ENCODE measurements at regions of chr6 and their contacts with region 1.

Region 1: DNA sequence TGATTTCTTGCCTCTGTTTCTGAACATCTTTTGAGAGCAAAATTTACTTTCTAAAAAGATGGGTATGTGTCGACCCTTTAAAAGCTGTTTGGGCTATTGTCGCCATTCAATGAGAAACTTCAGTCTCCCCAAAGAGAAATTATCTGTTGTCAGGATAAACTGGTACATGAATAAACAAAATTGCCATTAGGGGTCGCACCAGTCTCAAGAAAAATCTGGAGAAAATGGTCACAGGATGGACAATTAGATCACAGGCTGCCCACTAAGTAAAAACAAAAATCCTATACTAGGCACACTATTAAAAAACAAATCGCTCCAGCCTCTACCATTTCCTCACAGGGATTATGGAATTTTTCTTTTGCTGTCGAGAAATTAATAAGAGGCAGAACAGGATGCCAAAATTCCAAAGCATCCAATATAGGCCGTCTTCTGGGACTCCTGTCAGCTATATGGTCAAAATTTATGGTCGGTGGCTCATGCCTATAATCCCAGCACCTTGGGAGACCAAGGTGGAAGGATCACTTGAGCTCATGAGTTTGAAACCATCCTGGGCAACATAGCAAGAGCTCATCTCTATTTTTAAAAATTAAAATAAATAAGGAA is 5.5 kb upstream of the HLA-E start:
- DNase-seq: peak in 1 of 2 experiments; percentile 61
- ATAC-seq: no peak
- H3K4me3 ChIP-seq: no peak overlapping the region
- H3K27ac ChIP-seq: no peak overlapping the region
- H3K4me1 ChIP-seq: peaks cover 14% of the 10 kb centered on the region; the same call in 1 of the 3 replicates
- CTCF ChIP-seq: peak; percentile 62
- EP300 ChIP-seq: no peak
- POLR2A ChIP-seq: no peak
- RAD21 ChIP-seq: peak; percentile 68

Region 2: GRCh38 chr6:30441171-30441570 is 42.6 kb before region 1 on chr6:
- CTCF ChIA-PET with region 1: no interaction called
- POLR2A ChIA-PET with region 1: no interaction called
- DNase-seq: no peak
- ATAC-seq: no peak
- H3K4me3 ChIP-seq: no peak overlapping the region
- H3K27ac ChIP-seq: no peak overlapping the region
- H3K4me1 ChIP-seq: 0 out of 3 replicates have a peak, but pooled peaks cover 4% of the 10 kb centered on the region
- CTCF ChIP-seq: no peak
- EP300 ChIP-seq: no peak
- POLR2A ChIP-seq: no peak
- RAD21 ChIP-seq: no peak

Region 3: GRCh38 chr6:30453508-30454116 is 30.2 kb before region 1 on chr6:
- CTCF ChIA-PET with region 1: interaction called, 13 read pairs
- POLR2A ChIA-PET with region 1: no interaction called
- DNase-seq: peak; percentile 81 to 89
- ATAC-seq: peak; percentile 82 to 97
- H3K4me3 ChIP-seq: no peak overlapping the region
- H3K27ac ChIP-seq: no peak overlapping the region
- H3K4me1 ChIP-seq: no peaks in the 10 kb centered on the region
- CTCF ChIP-seq: peak; percentile 61
- EP300 ChIP-seq: no peak
- POLR2A ChIP-seq: no peak
- RAD21 ChIP-seq: peak; percentile 52 to 60

Region 4: DNA sequence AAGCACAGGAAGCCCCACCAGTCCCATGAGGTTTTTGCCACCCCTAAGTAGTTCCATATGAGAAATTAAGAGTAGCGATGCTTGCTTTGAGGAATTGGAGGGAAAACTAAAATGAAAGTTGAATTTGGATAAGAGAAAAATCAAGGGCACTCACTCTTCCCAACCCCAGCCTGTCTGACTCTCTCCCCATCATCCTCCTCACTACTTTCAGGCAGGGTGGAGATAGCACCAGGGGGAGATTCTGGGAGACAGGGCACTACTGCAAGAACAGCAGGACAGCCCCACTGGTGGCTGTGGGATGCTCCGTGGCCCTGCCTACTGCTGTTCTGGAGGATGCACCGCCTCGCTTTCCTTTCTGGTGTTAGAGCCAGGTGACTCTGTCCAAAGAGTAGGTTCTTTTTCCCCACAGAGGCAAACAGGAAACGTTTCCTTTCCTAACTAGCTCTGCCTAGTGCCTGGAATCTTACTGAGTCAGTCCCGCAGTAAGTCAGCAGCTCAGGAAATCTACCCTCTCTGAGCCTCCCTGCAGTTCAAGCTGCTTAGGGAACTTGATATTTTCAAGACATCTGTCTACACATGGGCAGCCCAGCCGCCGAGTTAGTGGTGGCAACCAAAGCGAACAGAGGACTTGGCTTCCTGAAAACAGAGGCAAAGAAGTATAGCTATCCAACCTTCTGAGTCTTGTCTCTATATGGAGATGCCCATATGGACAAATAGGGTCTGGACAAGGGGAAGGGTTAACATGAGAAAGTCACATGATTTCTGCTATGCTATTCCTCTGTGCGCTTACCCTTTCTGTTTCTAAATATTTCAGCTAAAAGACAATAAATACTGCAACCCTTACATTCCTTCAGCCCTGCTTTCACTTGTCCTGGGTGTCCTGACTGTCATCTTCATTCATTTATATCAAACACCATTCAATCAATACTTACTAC is 16.9 kb after region 1 on chr6:
- CTCF ChIA-PET with region 1: interaction called, 27 read pairs
- POLR2A ChIA-PET with region 1: no interaction called
- DNase-seq: no peak
- ATAC-seq: no peak
- H3K4me3 ChIP-seq: no peak overlapping the region
- H3K27ac ChIP-seq: no peak overlapping the region
- H3K4me1 ChIP-seq: no peaks in the 10 kb centered on the region
- CTCF ChIP-seq: no peak
- EP300 ChIP-seq: no peak
- POLR2A ChIP-seq: no peak
- RAD21 ChIP-seq: no peak

Region 5: GRCh38 chr6:30533460-30534294 is 49.9 kb after region 1 on chr6:
- CTCF ChIA-PET with region 1: interaction called, 320 read pairs
- POLR2A ChIA-PET with region 1: no interaction called
- DNase-seq: no peak
- ATAC-seq: no peak
- H3K4me3 ChIP-seq: no peak overlapping the region
- H3K27ac ChIP-seq: no peak overlapping the region
- H3K4me1 ChIP-seq: no peaks in the 10 kb centered on the region
- CTCF ChIP-seq: no peak
- EP300 ChIP-seq: no peak
- POLR2A ChIP-seq: no peak
- RAD21 ChIP-seq: no peak

Region 6: GRCh38 chr6:30600451-30600961 is 116.7 kb after region 1 on chr6:
- CTCF ChIA-PET with region 1: interaction called, 24 read pairs
- POLR2A ChIA-PET with region 1: interaction called, 3 read pairs
- DNase-seq: peak in 1 of 2 experiments; percentile 26
- ATAC-seq: no peak
- H3K4me3 ChIP-seq: no peak overlapping the region
- H3K27ac ChIP-seq: no peak overlapping the region
- H3K4me1 ChIP-seq: no peaks in the 10 kb centered on the region
- CTCF ChIP-seq: no peak
- EP300 ChIP-seq: no peak
- POLR2A ChIP-seq: no peak
- RAD21 ChIP-seq: no peak

Region 7: GRCh38 chr6:30619561-30619960 is 135.8 kb after region 1 on chr6:
- CTCF ChIA-PET with region 1: no interaction called
- POLR2A ChIA-PET with region 1: no interaction called
- DNase-seq: no peak
- ATAC-seq: no peak
- H3K4me3 ChIP-seq: no peak overlapping the region
- H3K27ac ChIP-seq: no peak overlapping the region
- H3K4me1 ChIP-seq: peaks cover 7% of the 10 kb centered on the region
- CTCF ChIP-seq: no peak
- EP300 ChIP-seq: no peak
- POLR2A ChIP-seq: no peak
- RAD21 ChIP-seq: no peak

Measured in A549 (cell line).